AG04449 (cell line): ENCODE measurements at regions of chr4 and their contacts with region 1.

Region 1: DNA sequence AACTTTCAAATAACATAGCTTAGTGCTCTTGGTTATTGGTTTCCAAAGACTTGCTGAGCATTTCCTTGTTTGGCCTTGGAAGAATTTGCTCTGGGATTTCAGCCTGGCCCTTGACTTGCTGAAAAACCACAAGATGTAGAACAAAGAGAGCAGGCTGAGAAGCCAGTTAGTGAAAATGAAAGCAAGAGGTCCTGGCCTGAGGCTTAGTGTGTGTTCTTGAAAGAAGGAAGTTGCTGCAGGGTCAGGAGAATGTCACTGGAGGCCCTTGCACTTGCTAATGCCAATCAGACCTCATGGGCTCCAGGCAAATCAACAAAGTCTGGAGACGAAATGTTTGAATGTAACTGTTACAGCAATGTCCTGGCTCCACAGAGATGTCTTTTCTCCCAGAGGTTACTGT is 79.4 kb downstream of the SYNPO2 start:
- DNase-seq: peak; percentile 78
- H3K4me3 ChIP-seq: no peak overlapping the region; the same call in 1 of the 2 replicates
- CTCF ChIP-seq: no peak

Region 2: DNA sequence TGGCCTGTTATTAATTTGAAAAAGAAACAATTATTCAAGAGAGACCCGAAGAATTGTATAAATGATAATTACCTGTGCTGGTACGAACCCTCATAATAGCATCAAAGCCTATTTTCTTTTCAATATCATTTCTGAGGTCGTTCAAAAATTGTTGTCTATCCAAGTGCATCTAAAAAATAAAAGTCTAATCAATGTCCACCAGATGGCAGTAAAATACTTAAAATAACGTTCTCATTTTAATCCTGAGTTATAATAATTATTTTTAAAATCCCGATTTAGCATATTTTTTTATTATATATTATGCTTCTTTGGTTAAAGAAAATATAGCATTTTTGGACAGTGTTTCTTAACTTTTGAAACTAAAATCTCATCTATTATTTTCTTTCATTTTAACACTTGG is 227.1 kb before region 1 on chr4:
- CTCF ChIA-PET with region 1: interaction called, 15 read pairs
- POLR2A ChIA-PET with region 1: no interaction called
- DNase-seq: no peak
- H3K4me3 ChIP-seq: no peak overlapping the region
- CTCF ChIP-seq: no peak

Region 3: DNA sequence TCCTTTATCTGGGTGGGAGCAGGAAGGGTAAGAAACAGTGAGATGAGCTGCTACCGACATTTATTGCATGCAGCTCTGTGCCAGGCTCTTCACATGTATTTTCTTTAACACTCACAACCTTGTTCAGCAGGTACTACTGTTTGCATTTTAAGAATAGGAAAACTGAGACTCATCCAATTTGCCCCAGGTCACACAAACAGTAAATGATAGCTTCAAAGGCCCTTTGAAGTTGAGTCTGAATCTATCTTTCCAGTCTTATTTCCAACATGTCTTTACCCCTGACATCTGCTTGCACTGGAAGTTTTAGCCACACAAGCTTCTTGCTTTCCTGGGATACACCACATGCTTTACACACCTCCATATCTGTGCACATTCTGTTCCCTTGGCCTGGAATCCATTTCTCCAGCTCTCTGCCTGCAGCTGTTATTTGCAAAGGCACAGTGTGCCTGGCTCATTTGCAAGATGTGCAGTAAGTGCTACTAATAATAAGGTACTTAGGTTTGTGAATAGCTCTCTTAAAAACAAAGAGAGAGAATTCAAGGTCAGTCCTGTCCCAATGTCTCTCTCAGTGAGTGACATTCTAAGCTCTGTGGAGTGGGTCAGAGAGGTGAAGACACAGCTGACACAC is 221.6 kb before region 1 on chr4:
- CTCF ChIA-PET with region 1: interaction called, 15 read pairs
- POLR2A ChIA-PET with region 1: no interaction called
- DNase-seq: no peak
- H3K4me3 ChIP-seq: no peak overlapping the region
- CTCF ChIP-seq: no peak

Region 4: DNA sequence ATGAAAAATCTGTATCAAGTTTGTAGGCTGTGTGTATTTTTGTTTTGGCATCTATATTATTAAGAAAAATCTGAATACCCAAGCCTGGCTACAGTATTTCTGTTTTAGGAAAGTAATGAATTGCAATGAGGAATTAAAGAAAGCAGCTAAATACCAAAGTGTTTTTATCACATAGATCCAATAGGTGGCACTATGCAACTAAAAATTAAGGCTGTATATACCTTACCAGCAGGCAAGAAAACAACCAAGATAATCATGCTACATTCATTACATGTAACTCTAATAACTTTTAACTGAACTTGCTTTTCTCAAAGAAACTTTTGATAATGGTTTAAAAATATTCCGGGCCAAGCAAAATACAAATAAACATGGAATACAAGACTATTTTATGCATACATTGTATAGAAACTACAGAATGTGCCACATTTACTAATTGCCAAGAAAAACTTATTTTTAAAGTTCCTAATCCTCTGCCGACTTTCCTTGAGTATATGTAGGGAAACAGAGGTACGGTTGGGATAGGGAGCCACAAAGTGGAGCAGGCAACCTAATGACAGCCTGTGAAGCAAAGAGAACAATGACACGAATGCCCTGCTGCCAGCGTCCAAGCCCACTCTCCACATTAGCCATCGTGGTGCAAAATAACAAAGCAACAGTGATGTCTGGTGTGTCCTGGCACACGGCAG is 195.8 kb before region 1 on chr4:
- CTCF ChIA-PET with region 1: interaction called, 79 read pairs
- POLR2A ChIA-PET with region 1: no interaction called
- DNase-seq: no peak
- H3K4me3 ChIP-seq: no peak overlapping the region
- CTCF ChIP-seq: peak; percentile 22

Region 5: GRCh38 chr4:118954246-118954645 is 13.8 kb before region 1 on chr4:
- CTCF ChIA-PET with region 1: interaction called, 21 read pairs
- POLR2A ChIA-PET with region 1: no interaction called
- DNase-seq: no peak
- H3K4me3 ChIP-seq: no peak overlapping the region
- CTCF ChIP-seq: peak; percentile 28